Breast epithelium (tissue), 4 donors: ENCODE measurements at regions of chr9 and their contacts with region 1.

Region 1: GRCh38 chr9:71001780-71002386 is 119.5 kb downstream of the TRPM3 start:
- DNase-seq: peak in 1 of 2 donors; percentile 21
- H3K4me3 ChIP-seq: no peak overlapping the region
- H3K27ac ChIP-seq: no peak overlapping the region
- H3K4me1 ChIP-seq: no peaks in the 10 kb centered on the region
- H3K27me3 ChIP-seq: no peaks in the 10 kb centered on the region
- CTCF ChIP-seq: peak in 2 of 3 donors; percentile 48 to 55
- POLR2A ChIP-seq: no peak

Region 2: DNA sequence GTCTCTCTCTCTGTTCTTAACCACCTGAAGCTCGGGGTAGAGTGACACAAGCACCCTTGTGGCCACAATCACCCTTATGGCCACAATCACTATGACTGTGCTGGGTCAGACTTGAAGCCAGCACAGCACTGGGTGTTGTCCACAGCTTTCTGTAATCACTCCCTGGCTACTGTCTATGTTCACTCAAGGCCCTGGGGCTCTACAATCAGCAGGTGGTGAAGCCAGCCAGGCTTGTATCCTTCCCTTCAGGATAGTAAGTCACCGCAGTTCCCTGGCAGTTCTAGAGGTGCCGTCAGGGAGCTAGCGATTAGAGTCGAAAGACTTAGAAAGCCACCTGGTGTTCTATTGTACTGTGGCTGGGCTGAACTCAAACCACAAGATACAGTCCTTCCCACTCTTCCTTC is 1191.6 kb after region 1 on chr9:
- intact Hi-C with region 1: loop called (anchors 5 kb)
- DNase-seq: no peak
- H3K4me3 ChIP-seq: no peak overlapping the region
- H3K27ac ChIP-seq: no peak overlapping the region
- H3K4me1 ChIP-seq: no peaks in the 10 kb centered on the region
- H3K27me3 ChIP-seq: no peaks in the 10 kb centered on the region
- CTCF ChIP-seq: no peak
- POLR2A ChIP-seq: no peak